Naive thymus-derived CD4-positive, alpha-beta T cell (primary cell): ENCODE measurements at regions of chr19 and their contacts with region 1.

Region 1: DNA sequence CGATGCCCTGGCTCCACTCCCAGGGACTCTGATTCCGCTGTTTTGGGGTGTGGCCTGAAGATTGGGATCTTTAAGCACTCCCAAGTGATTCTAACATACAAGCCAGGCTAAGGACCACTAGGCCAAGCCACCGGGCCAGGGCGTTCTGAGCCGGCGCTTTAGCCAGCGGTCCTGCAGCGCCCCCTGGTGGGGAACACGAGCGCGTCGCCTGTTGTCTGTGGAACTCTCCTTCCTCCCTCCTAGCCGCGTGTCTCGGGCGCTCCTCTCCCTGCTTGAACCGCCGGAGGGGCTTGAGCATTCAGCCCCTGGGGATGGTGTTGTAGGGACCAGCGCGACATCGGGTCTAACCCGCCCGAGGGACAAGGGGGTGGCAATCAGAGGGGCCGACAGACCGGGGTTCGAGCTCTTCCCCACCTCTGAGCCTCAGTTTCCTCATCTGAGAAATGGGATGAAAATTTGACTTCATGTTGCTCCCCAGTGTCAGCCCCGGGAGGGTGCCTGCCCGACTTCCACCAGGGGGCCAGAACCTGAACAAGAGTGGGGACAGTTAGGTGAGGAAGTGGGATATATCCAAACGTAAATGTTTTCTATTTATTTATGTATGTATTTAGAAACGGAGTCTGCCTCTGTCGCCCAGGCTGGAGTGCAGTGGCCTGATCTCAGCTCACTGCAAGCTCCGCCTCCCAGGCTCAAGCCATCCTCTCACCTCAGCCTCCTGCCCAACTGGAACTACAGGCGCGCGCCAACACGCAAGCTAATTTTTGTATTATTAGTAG is 18.0 kb upstream of the PNMA8B start:
- DNase-seq: peak in 8 of 9 donors; percentile 59 to 86 (median 72)
- ATAC-seq: peak; percentile 89
- H3K4me3 ChIP-seq: no peak overlapping the region
- H3K4me3 Mint-ChIP-seq: no peak overlapping the region
- H3K27ac ChIP-seq: no peak overlapping the region
- H3K27ac Mint-ChIP-seq: peak overlapping the region in 2 of 9 donors; percentile 32 to 64
- H3K4me1 ChIP-seq: peaks cover 5 to 22% of the 10 kb centered on the region in 2 donors
- H3K4me1 Mint-ChIP-seq: peaks cover 8 to 33% (median 29%) of the 10 kb centered on the region in 7 donors
- H3K27me3 ChIP-seq: no peaks in the 10 kb centered on the region
- H3K27me3 Mint-ChIP-seq: peaks cover 0 to 30% (median 13%) of the 10 kb centered on the region in 5 donors

Region 2: DNA sequence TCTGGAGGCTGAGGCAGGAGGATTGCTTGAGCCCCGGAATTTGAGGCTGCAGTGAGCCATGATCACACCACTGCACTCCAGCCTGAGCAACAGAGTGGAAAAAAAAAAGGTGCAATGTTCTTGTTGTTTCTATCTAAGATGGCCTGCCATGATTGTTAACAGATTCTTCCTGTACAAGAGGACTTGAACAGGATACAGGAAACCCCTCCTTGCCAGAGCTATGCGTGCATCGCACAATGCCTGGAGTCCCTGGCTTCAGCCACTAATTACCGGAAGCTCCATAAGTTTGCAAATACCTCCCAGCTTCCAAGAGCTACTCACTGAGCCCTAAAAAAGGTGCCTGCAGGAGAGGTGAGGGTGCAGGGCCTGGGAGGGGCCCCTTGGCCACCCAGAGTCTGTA is 229.9 kb before region 1 on chr19:
- CTCF ChIA-PET with region 1: no interaction called
- POLR2A ChIA-PET with region 1: no interaction called
- intact Hi-C with region 1: loop called in 1 of 2 experiments (anchors 1 kb)
- DNase-seq: no peak
- ATAC-seq: no peak
- H3K4me3 ChIP-seq: no peak overlapping the region
- H3K4me3 Mint-ChIP-seq: no peak overlapping the region
- H3K27ac ChIP-seq: no peak overlapping the region
- H3K27ac Mint-ChIP-seq: peak overlapping the region in 1 of 9 donors; percentile 25
- H3K4me1 ChIP-seq: no peaks in the 10 kb centered on the region
- H3K4me1 Mint-ChIP-seq: peaks cover 0 to 3% (median 0%) of the 10 kb centered on the region in 7 donors
- H3K27me3 ChIP-seq: no peaks in the 10 kb centered on the region
- H3K27me3 Mint-ChIP-seq: peaks cover 8 to 11% (median 11%) of the 10 kb centered on the region in 5 donors

Region 3: GRCh38 chr19:46404055-46404752 is 109.4 kb before region 1 on chr19:
- CTCF ChIA-PET with region 1: interaction called, 8 read pairs
- POLR2A ChIA-PET with region 1: no interaction called
- intact Hi-C with region 1: loop called (anchors 1 kb)
- DNase-seq: no peak
- ATAC-seq: peak; percentile 22
- H3K4me3 ChIP-seq: peak overlapping the region; percentile 2
- H3K4me3 Mint-ChIP-seq: peak overlapping the region; percentile 34 to 94 (median 74)
- H3K27ac ChIP-seq: no peak overlapping the region
- H3K27ac Mint-ChIP-seq: peak overlapping the region in 2 of 9 donors; percentile 42 to 74
- H3K4me1 ChIP-seq: peaks cover 0 to 15% of the 10 kb centered on the region in 2 donors
- H3K4me1 Mint-ChIP-seq: peaks cover 10 to 30% (median 21%) of the 10 kb centered on the region in 7 donors
- H3K27me3 ChIP-seq: peaks cover 0 to 15% of the 10 kb centered on the region in 2 donors
- H3K27me3 Mint-ChIP-seq: peaks cover 49 to 76% (median 57%) of the 10 kb centered on the region in 5 donors

Region 4: DNA sequence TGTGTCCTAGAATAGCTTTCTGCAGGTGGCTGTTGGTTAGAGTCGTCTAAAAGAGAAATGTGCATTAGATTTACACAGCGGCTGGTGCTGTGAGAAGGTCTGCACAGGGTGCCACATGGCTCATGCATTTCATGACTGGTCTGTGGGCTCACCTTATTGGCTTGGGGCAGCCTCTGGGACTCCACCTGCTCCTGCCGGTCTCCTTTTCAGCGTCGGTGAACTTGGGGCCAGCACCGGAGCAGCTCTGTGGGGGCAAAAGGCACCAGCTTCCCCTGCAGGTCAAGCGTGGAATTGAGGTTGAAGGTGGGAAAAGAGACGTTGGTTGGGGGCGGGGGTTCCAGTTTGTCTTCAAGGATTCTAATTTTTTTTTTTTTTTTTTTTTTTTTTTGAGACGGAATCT is 81.8 kb before region 1 on chr19:
- CTCF ChIA-PET with region 1: no interaction called
- POLR2A ChIA-PET with region 1: no interaction called
- intact Hi-C with region 1: no loop called
- DNase-seq: no peak
- ATAC-seq: no peak
- H3K4me3 ChIP-seq: no peak overlapping the region
- H3K4me3 Mint-ChIP-seq: no peak overlapping the region
- H3K27ac ChIP-seq: no peak overlapping the region
- H3K27ac Mint-ChIP-seq: no peak overlapping the region
- H3K4me1 ChIP-seq: peaks cover 0 to 2% of the 10 kb centered on the region in 2 donors
- H3K4me1 Mint-ChIP-seq: peaks cover 15 to 24% (median 19%) of the 10 kb centered on the region in 7 donors
- H3K27me3 ChIP-seq: peaks cover 0 to 4% of the 10 kb centered on the region in 2 donors
- H3K27me3 Mint-ChIP-seq: peaks cover 58 to 69% (median 64%) of the 10 kb centered on the region in 5 donors

Region 5: GRCh38 chr19:46466536-46467196 is 47.0 kb before region 1 on chr19:
- CTCF ChIA-PET with region 1: no interaction called
- POLR2A ChIA-PET with region 1: no interaction called
- intact Hi-C with region 1: no loop called
- DNase-seq: no peak
- ATAC-seq: no peak
- H3K4me3 ChIP-seq: no peak overlapping the region
- H3K4me3 Mint-ChIP-seq: no peak overlapping the region
- H3K27ac ChIP-seq: no peak overlapping the region
- H3K27ac Mint-ChIP-seq: no peak overlapping the region
- H3K4me1 ChIP-seq: no peaks in the 10 kb centered on the region
- H3K4me1 Mint-ChIP-seq: peaks cover 0 to 3% (median 0%) of the 10 kb centered on the region in 7 donors
- H3K27me3 ChIP-seq: peaks cover 0 to 5% of the 10 kb centered on the region in 2 donors
- H3K27me3 Mint-ChIP-seq: peaks cover 7 to 34% (median 33%) of the 10 kb centered on the region in 5 donors

Region 6: GRCh38 chr19:46529622-46530462 is 16.2 kb after region 1 on chr19:
- CTCF ChIA-PET with region 1: interaction called, 241 read pairs
- POLR2A ChIA-PET with region 1: interaction called, 5 read pairs
- intact Hi-C with region 1: loop called in 1 of 2 experiments (anchors 1 kb)
- DNase-seq: peak; percentile 57 to 83 (median 73)
- ATAC-seq: peak; percentile 95
- H3K4me3 ChIP-seq: no peak overlapping the region
- H3K4me3 Mint-ChIP-seq: peak overlapping the region in 4 of 10 donors; percentile 1 to 65 (median 32)
- H3K27ac ChIP-seq: no peak overlapping the region
- H3K27ac Mint-ChIP-seq: peak overlapping the region in 7 of 9 donors; percentile 17 to 89 (median 68)
- H3K4me1 ChIP-seq: peaks cover 8 to 19% of the 10 kb centered on the region in 2 donors
- H3K4me1 Mint-ChIP-seq: peaks cover 15 to 35% (median 23%) of the 10 kb centered on the region in 7 donors
- H3K27me3 ChIP-seq: no peaks in the 10 kb centered on the region
- H3K27me3 Mint-ChIP-seq: no peaks in the 10 kb centered on the region

Region 7: GRCh38 chr19:46542428-46543230 is 29.0 kb after region 1 on chr19:
- CTCF ChIA-PET with region 1: interaction called, 241 read pairs
- POLR2A ChIA-PET with region 1: interaction called, 5 read pairs
- intact Hi-C with region 1: loop called (anchors 1 kb)
- DNase-seq: peak; percentile 46 to 73 (median 64)
- ATAC-seq: peak; percentile 87
- H3K4me3 ChIP-seq: no peak overlapping the region
- H3K4me3 Mint-ChIP-seq: no peak overlapping the region
- H3K27ac ChIP-seq: no peak overlapping the region
- H3K27ac Mint-ChIP-seq: peak overlapping the region in 2 of 9 donors; percentile 14 to 16
- H3K4me1 ChIP-seq: no peaks in the 10 kb centered on the region
- H3K4me1 Mint-ChIP-seq: peaks cover 2 to 13% (median 5%) of the 10 kb centered on the region in 7 donors
- H3K27me3 ChIP-seq: no peaks in the 10 kb centered on the region
- H3K27me3 Mint-ChIP-seq: peaks cover 0 to 11% (median 0%) of the 10 kb centered on the region in 5 donors

Region 8: GRCh38 chr19:46639358-46640182 is 125.9 kb after region 1 on chr19:
- CTCF ChIA-PET with region 1: no interaction called
- POLR2A ChIA-PET with region 1: no interaction called
- intact Hi-C with region 1: no loop called
- DNase-seq: peak in 1 of 9 donors; percentile 49
- ATAC-seq: peak; percentile 21
- H3K4me3 ChIP-seq: peak overlapping the region; percentile 48
- H3K4me3 Mint-ChIP-seq: peak overlapping the region in 5 of 10 donors; percentile 12 to 71 (median 51)
- H3K27ac ChIP-seq: peak overlapping the region; percentile 72
- H3K27ac Mint-ChIP-seq: peak overlapping the region in 1 of 9 donors; percentile 7
- H3K4me1 ChIP-seq: peaks cover 16 to 22% of the 10 kb centered on the region in 2 donors
- H3K4me1 Mint-ChIP-seq: peaks cover 0 to 16% (median 7%) of the 10 kb centered on the region in 7 donors
- H3K27me3 ChIP-seq: no peaks in the 10 kb centered on the region
- H3K27me3 Mint-ChIP-seq: peaks cover 0 to 29% (median 5%) of the 10 kb centered on the region in 5 donors